ENCODE measurements at regions of chr12 and their contacts with region 1.

Region 1: DNA sequence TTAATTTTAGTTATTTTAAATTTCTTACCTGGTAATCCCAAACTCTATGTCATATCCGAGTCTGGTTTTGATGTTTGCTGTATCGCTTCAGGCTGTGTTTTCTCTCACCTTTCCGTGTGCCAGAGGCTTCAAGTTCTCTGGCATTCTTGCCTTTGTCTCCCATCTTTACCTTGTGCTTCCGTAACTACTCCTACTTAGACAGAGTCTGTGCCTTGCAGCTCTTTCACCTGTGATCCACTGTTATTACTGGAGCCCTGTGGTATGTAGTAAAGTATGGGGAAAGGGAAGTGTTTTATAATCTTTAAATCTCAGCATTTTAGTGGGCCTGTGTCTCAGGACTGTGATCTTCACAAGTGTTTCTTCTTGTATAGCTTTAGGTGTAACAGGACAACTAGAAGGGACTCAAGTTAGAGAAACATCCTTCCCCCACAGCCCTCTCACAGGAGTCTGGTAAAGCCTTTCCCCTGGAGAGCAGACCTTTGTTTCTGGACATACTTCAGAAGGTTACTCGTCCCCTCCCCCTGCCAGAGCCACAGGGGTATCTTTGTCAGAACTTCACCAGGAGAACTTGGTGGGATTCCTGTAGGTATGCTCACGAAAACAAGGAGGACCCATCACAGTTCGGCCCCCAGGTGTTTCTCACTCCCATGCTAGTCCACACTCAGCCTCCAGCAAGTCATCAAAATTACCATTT is 11.1 kb downstream of the IFNG start:
- DNase-seq: no peak
- ATAC-seq: no peak
- H3K4me3 ChIP-seq: no peak overlapping the region
- H3K27ac ChIP-seq: no peak overlapping the region
- H3K4me1 ChIP-seq: peaks cover 0 to 5% (median 0%) of the 10 kb centered on the region in 9 donors
- H3K27me3 ChIP-seq: no peaks in the 10 kb centered on the region
- CTCF ChIP-seq: no peak

Region 2: DNA sequence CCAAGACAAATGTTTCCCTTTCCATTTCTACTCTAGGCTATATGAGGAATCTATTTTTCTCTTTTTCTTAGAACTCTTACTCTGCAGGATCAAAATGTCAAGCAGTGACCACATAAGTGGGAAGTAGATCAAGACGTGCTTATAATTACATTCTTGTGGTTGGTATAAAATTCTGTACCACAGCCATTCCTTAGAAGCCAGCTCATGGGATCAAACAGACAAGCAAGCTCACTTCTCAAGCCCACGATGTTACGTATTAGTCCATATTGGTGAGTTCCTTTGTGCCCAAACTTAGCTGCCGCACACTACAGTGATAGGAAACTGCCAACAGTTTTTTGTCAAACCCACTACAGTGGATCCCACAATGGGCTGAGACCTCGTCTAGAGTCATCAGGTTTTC is 42.2 kb before region 1 on chr12:
- intact Hi-C with region 1: no loop called
- DNase-seq: no peak
- ATAC-seq: no peak
- H3K4me3 ChIP-seq: no peak overlapping the region
- H3K27ac ChIP-seq: no peak overlapping the region
- H3K4me1 ChIP-seq: no peaks in the 10 kb centered on the region
- H3K27me3 ChIP-seq: no peaks in the 10 kb centered on the region
- CTCF ChIP-seq: no peak

Region 3: GRCh38 chr12:68135520-68135919 is 12.9 kb before region 1 on chr12:
- intact Hi-C with region 1: loop called in 1 of 10 experiments (anchors 1 kb)
- DNase-seq: no peak
- ATAC-seq: no peak
- H3K4me3 ChIP-seq: no peak overlapping the region
- H3K27ac ChIP-seq: no peak overlapping the region
- H3K4me1 ChIP-seq: no peaks in the 10 kb centered on the region
- H3K27me3 ChIP-seq: peaks cover 0 to 3% (median 0%) of the 10 kb centered on the region in 7 donors
- CTCF ChIP-seq: no peak

Region 4: DNA sequence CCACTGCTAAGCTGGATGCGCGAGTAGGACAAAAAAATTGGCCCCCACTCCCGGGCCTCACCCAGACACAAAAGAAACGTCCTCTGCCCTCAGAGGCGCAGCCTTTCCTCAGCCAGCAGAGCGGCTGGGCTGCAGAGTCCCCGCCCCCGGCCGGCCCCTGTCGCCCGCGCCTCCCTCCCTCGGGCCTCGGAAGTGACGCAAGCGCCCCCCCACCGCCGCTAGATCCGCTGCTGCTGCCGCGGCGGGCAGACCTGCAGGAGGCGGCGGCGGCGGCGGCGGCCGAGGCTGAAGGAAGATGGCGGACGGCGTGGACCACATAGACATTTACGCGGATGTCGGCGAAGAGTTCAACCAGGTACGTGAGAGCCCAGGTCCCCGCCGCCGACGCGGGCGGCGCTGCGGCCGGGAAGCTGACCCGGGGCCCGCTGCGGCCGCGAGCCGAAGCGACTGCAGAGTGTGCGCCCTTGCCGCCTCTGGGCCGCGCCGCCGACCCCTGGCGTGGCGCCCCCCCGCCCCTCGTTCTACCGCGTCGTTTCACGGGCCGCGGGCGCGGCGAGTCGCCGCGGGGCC is 1091.0 kb after region 1 on chr12 and contains the start of gene CPSF6:
- intact Hi-C with region 1: no loop called
- DNase-seq: peak; percentile 96 to 98
- ATAC-seq: peak; percentile 99 to 100 (median 99)
- H3K4me3 ChIP-seq: peak within 1 kb of the TSS; percentile 49 to 99 (median 82)
- H3K27ac ChIP-seq: peak within 1 kb of the TSS; percentile 72 to 99 (median 94)
- H3K4me1 ChIP-seq: peaks cover 7 to 50% (median 43%) of the 10 kb centered on the region in 9 donors
- H3K27me3 ChIP-seq: no peaks in the 10 kb centered on the region
- CTCF ChIP-seq: peak in 4 of 9 donors; percentile 20 to 33 (median 26)
- total RNA-seq, gene CPSF6: 23.9 to 34.6 (median 29.3) TPM

Measured in heart right ventricle (tissue), 16 donors.